HepG2 (cell line): ENCODE measurements at regions of chr3 and their contacts with region 1.

Region 1: DNA sequence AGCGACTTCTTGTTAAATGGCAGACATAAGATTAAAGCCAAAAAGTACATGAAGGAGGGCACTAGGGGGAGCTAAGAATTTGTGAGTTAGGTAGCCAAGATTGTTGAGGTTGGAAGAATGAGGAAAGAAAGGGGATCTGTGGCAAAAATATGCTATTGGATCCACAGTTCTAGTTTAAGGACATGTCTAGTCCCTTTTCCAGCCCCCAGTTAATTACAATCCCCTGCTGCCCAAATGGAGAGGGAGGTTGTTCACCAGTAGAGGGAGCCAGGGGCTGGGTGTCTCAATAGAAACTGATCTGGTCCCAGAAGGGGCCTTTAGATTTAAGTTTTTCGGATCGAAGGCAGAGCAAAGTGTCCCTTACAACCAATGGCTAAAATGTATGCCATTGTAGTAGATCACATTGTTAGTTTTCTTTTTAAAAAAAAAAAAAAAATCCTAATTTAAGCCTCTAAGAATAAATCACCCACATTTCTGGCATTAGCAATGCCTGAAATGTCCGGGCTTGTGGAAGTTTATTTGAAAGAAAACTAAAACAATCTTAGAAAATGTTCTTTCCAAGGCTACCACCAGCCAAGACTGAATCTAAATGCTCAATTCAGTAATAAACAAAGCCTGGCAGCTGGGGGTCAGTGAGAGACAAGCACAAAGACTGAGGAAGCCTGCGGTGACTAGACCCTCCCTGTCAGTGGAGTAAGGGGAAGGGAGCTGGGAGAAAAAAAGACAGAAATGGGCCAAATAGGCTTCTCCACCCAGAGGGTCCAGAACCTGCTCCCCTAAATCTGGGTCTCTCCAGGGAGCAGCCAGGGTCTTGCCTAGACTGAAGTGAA is 7.1 kb downstream of the COL8A1 start:
- DNase-seq: peak; percentile 16
- ATAC-seq: peak; percentile 72
- H3K4me3 ChIP-seq: no peak overlapping the region
- H3K27ac ChIP-seq: no peak overlapping the region
- H3K4me1 ChIP-seq: no peaks in the 10 kb centered on the region
- H3K27me3 ChIP-seq: no peaks in the 10 kb centered on the region; a peak in 1 of 5 replicates
- CTCF ChIP-seq: peak; percentile 57
- EP300 ChIP-seq: no peak
- POLR2A ChIP-seq: no peak
- RAD21 ChIP-seq: no peak

Region 2: DNA sequence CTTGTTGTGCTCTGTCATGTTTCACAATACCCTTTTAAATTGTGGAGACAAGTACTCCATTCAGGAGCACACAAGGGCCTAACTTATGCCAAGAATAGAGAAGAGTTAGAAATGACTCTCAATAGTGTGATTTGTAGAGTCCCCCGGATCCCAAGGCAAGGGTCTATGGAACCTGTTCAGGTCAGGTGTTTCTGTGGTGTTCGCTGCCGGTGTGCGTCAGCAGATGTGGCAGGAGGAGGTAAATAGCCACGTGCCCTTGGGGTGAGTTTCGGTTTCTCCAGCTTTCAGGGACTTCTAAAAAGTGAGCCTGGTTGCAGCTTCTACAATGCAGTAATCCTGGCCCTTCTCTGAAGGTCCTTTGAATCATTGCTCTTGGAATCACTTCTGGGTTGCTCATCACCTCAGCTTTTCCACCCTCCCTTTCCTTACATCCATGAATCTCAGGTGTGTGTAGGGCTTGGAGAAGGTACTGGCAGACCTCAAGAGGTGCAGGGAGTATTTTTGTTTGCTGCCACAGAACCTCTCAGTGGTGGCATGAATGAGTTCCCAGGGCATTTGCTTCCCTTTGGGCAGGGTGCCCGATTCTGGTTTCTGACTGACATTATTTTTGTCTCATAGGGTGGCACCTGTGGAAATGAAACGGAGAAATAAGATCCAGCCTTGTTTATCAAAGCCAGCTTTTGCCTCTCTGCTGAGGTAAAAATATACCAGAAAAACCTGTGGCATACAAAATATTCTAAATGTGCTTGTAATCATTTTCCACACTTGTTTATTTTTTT is 875.0 kb before region 1 on chr3:
- CTCF ChIA-PET with region 1: no interaction called
- POLR2A ChIA-PET with region 1: no interaction called
- in situ Hi-C with region 1: no loop called
- intact Hi-C with region 1: no loop called
- DNase-seq: no peak
- ATAC-seq: no peak
- H3K4me3 ChIP-seq: no peak overlapping the region
- H3K27ac ChIP-seq: no peak overlapping the region
- H3K4me1 ChIP-seq: peaks cover 7% of the 10 kb centered on the region
- H3K27me3 ChIP-seq: no peaks in the 10 kb centered on the region
- CTCF ChIP-seq: no peak
- EP300 ChIP-seq: no peak
- POLR2A ChIP-seq: no peak
- RAD21 ChIP-seq: no peak

Region 3: DNA sequence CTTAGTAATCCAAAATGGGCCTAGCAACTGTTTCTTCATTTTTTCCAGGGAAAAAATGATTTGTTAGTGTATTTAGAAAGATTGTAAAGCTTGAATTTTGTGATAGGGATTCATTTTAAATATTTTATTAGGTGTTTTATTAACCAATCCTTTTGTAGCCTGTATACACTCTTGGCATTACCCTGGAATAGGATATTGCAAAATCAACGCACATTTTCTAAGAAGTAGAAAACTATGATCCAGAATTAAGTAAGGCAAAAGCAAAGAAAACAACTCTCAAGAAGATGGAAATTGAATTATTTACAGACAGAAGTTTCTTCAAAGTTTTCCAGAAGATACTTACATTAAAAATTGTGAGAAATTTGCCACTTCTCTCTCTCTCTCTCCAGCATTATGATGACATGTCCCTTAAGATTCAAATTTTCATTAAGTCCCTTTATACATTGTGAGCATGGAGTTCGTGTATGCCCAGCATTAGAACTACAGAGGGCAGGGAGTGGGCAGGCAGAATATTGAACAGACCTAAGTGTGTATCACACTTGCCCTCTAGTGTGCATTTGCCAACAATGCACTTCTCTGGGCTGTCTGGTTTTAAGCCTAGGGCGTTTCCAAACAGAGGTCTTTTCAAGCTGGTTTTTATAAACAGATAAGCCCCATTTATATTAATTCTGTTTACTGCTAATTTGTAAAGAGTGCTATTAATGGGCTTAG is 143.7 kb after region 1 on chr3:
- CTCF ChIA-PET with region 1: no interaction called
- POLR2A ChIA-PET with region 1: no interaction called
- in situ Hi-C with region 1: no loop called
- intact Hi-C with region 1: loop called (anchors 1 kb)
- DNase-seq: peak; percentile 37
- ATAC-seq: peak; percentile 99
- H3K4me3 ChIP-seq: no peak overlapping the region
- H3K27ac ChIP-seq: no peak overlapping the region
- H3K4me1 ChIP-seq: no peaks in the 10 kb centered on the region
- H3K27me3 ChIP-seq: 0 out of 5 replicates have a peak, but pooled peaks cover 0 to 4% of the 10 kb centered on the region in 2 experiments
- CTCF ChIP-seq: peak; percentile 66
- EP300 ChIP-seq: no peak
- POLR2A ChIP-seq: no peak
- RAD21 ChIP-seq: no peak

Region 4: DNA sequence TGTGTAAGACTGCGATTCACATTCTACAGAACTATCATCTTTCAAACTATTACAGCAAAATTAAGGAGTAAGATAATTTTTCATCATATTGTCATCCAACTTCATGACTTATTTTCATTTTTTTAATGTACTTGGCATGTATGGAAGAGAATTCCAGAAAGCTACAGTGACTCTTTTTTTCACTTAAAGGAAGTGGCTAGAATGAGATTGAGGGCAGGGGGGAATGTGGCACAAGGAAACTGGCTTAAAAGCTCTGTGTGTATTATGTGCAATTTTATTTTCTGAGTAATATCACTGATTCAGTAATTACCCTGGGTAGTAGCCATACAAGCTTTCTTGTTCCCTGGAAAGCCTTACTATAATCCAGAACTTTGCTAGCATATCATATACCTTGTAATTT is 374.2 kb after region 1 on chr3:
- CTCF ChIA-PET with region 1: no interaction called
- POLR2A ChIA-PET with region 1: no interaction called
- in situ Hi-C with region 1: no loop called
- intact Hi-C with region 1: no loop called
- DNase-seq: no peak
- ATAC-seq: no peak
- H3K4me3 ChIP-seq: no peak overlapping the region
- H3K27ac ChIP-seq: no peak overlapping the region
- H3K4me1 ChIP-seq: peaks cover 25% of the 10 kb centered on the region
- H3K27me3 ChIP-seq: no peaks in the 10 kb centered on the region
- CTCF ChIP-seq: no peak
- EP300 ChIP-seq: no peak
- POLR2A ChIP-seq: no peak
- RAD21 ChIP-seq: no peak